ENCODE measurements at regions of chr9 and their contacts with region 1.

Region 1: DNA sequence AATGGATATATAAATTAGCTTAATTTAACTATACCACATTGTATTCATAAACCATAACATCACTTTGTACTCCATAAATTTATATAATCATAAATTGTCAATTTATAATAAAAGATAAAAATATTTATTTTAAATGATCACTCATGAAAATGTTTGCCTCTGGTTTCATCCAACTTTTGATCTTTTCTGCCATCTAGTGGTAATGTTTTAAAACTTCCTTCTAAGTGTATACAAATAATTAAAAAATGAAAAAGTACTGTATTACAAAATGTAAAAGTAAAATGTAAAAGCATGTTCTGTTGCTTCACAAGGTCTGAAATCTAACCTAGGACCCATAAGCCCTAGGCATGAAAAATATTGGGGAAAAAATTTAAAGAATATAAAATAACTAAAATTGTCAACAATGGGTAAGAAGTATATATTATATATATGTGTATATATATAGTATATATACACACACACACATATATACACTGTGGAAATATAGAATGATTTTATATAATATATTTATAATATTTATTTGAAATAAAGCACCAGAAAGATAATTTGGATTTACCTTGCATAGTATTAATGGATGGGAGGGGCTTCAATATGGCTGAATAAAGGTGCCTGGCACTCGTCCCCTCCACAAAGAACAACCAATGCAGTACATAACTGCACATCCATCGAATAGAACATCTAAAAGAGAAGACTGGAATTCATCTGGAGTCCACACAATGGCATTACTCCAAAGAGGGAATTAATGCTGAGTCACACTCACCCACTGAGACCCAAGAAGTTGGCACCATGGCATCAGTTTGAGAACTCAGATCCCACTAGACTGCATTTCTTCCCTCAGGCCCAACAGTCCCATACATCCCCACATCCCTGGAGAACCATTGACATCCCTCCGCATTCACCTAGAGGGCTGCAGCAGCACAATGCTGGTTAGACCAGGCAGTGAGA is 32.5 kb downstream of the ANXA1 start:
- DNase-seq: no peak
- ATAC-seq: no peak

Region 2: GRCh38 chr9:72526901-72527800 is 657.0 kb before region 1 on chr9:
- intact Hi-C with region 1: no loop called
- DNase-seq: peak; percentile 76
- ATAC-seq: peak; percentile 92

Region 3: GRCh38 chr9:73104342-73104741 is 79.8 kb before region 1 on chr9:
- intact Hi-C with region 1: loop called (anchors 2 kb)
- DNase-seq: no peak
- ATAC-seq: no peak

Region 4: GRCh38 chr9:73116031-73116430 is 68.2 kb before region 1 on chr9:
- intact Hi-C with region 1: no loop called
- DNase-seq: no peak
- ATAC-seq: no peak

Region 5: DNA sequence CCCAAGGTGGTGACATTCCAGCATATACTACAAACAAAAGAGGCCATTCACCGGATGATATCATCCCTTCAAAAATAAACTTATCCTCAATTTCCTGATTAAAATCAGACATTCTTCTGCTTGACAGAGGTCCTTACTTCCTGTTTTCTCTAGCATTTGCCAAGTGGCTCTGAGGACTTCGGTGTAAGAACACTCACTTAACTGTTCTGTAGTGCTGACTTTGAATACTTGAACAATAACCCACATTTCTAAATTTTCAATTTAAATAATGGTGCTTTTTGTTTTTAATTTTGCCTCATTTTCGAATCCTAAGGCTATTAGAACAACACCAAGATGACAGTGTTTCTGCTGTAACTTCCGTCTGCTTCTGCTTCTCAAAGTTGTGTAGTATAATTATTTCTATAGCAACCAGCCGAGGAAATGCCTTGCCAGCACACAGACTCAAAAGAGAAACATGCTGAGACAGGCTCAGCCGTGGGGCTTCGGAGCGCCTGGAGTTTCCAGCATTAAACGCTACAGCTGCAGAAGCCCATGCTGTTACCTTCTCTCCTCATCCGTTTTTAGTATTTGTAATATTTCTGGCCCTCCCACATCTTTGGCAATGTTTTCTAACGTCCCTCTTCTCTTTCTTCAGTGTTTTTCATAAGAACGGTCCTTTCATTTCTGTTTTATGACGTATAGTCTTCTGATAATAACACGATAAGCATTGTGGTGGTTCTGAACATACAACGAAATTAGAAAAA is 52.0 kb before region 1 on chr9:
- intact Hi-C with region 1: no loop called
- DNase-seq: peak; percentile 85
- ATAC-seq: peak; percentile 94

Measured in Right ventricle myocardium inferior (tissue), 1 donor.